K562 (cell line): ENCODE measurements at regions of chr18 and their contacts with region 1.

Region 1: GRCh38 chr18:12657684-12658425 is at the start of gene SPIRE1:
- DNase-seq: peak; percentile 67 to 83 (median 78)
- ATAC-seq: peak; percentile 79
- H3K4me3 ChIP-seq: peak within 1 kb of the TSS; percentile 60
- H3K27ac ChIP-seq: peak within 1 kb of the TSS; percentile 80
- H3K4me1 ChIP-seq: peaks cover 11 to 16% of the 10 kb centered on the region in 2 experiments; a peak in 4 of 5 replicates
- H3K27me3 ChIP-seq: no peaks in the 10 kb centered on the region
- CTCF ChIP-seq: no peak
- EP300 ChIP-seq: no peak
- POLR2A ChIP-seq: no peak
- RAD21 ChIP-seq: no peak
- polyA plus RNA-seq, gene SPIRE1: 2.9 to 3.3 TPM

Region 2: DNA sequence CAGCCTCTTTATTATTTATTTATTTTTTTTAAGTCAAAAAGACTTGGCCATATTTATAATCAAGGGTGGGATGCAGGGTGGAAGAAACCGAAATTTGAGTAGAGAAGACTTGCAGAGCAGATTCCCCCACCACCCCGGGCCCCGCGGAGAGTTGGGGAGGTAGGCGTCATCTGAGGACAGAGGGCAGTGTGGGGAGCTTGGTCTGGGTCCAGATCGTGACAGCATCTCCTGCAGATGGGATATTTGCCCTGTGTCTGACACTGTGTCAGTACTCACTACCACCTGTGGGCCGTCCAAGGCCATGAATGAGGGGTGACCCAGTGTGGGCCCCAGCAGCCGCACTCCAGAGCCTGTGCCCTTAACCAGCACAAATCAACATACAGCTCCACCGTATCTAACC is 260.6 kb before region 1 on chr18:
- CTCF ChIA-PET with region 1: interaction called, 50 read pairs
- POLR2A ChIA-PET with region 1: no interaction called
- in situ Hi-C with region 1: no loop called
- intact Hi-C with region 1: no loop called
- DNase-seq: no peak
- ATAC-seq: peak; percentile 15; the same call in 2 of the 3 replicates
- H3K4me3 ChIP-seq: no peak overlapping the region
- H3K27ac ChIP-seq: no peak overlapping the region
- H3K4me1 ChIP-seq: peaks cover 6 to 11% of the 10 kb centered on the region in 2 experiments; a peak in 3 of 5 replicates
- H3K27me3 ChIP-seq: no peaks in the 10 kb centered on the region
- CTCF ChIP-seq: 0 out of 6 replicates have a peak, but pooled peaks of 1 of the 3 experiments have one; percentile 2
- EP300 ChIP-seq: no peak
- POLR2A ChIP-seq: no peak
- RAD21 ChIP-seq: no peak

Region 3: GRCh38 chr18:12470382-12471075 is 187.3 kb before region 1 on chr18:
- CTCF ChIA-PET with region 1: no interaction called
- POLR2A ChIA-PET with region 1: no interaction called
- in situ Hi-C with region 1: no loop called
- intact Hi-C with region 1: loop called (anchors 10 kb)
- DNase-seq: no peak
- ATAC-seq: no peak
- H3K4me3 ChIP-seq: no peak overlapping the region
- H3K27ac ChIP-seq: no peak overlapping the region
- H3K4me1 ChIP-seq: peaks cover 7 to 8% of the 10 kb centered on the region in 2 experiments; a peak in 4 of 5 replicates
- H3K27me3 ChIP-seq: no peaks in the 10 kb centered on the region
- CTCF ChIP-seq: no peak
- EP300 ChIP-seq: no peak
- POLR2A ChIP-seq: no peak
- RAD21 ChIP-seq: no peak

Region 4: DNA sequence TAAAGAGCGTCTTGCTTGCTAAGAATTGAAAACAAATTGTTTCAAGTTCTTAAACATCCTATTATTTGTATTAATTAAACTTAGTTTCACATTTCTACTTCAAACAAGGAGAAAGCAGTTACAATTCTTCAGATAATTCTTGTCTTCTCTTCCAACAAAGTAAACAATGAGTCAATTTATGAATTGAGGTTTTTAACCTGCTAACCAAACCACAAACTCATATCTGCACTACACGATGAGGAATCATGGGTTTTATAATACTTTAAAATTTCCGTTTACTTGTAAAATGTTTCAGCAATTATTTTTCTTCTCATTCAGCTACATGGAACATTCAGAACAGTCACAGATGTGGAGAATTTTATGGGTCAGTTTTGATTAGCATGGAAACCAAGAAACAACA is 114.2 kb before region 1 on chr18:
- CTCF ChIA-PET with region 1: interaction called, 14 read pairs
- POLR2A ChIA-PET with region 1: no interaction called
- in situ Hi-C with region 1: no loop called
- intact Hi-C with region 1: loop called (anchors 5 kb)
- DNase-seq: no peak
- ATAC-seq: no peak
- H3K4me3 ChIP-seq: no peak overlapping the region
- H3K27ac ChIP-seq: no peak overlapping the region
- H3K4me1 ChIP-seq: no peaks in the 10 kb centered on the region; a peak in 1 of 5 replicates
- H3K27me3 ChIP-seq: no peaks in the 10 kb centered on the region
- CTCF ChIP-seq: no peak
- EP300 ChIP-seq: no peak
- POLR2A ChIP-seq: no peak
- RAD21 ChIP-seq: no peak